Colonic mucosa (tissue), 4 donors: ENCODE measurements at regions of chr16 and their contacts with region 1.

Region 1: DNA sequence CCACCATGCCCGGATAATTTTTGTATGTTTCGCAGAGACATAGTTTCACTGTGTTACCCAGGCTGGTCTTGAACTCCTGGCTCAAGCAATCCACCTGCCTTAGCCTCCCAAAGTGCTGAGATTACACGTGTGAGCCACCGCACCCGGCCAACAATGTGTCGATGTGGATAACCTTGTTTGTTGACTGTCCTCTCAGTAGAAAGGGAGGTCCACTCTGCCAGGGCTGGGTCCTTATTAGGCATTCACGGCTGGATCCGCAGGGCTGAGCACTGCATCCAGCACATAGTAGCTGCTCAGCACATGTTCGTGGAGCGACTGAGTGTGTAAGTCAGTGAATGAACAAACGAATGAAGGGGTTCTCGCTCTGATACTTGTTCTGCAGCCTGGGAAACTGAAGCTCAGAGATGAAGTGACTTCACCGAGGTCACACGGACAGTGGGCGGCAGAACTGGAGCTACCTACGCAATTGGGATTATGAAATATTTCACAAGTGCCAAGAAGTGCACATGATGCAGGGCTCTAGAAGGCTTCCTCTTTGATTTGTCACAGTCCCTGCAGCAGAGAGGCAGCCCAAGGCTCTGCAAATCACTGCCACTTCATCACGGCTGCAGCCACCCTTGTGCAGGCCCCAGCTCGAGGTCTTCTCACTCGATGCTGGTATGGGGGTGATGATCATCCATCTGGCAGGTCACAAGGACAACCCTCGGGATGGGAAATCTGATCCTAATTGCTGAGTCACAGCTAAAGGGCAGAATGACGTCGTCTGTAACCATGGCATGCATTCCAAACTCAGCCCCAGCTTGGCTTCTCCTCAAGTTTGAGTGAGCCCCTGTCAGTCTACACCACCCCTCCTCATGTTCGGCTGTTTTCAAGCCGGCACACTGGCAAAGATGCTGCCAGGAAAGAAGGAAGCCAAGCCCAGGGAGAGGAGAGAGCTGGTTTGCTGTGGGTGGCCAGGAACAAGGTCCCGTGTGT is 28.0 kb upstream of the SNN start:
- DNase-seq: peak; percentile 58
- H3K4me3 ChIP-seq: no peak overlapping the region
- H3K27ac ChIP-seq: peak overlapping the region; percentile 56
- H3K4me1 ChIP-seq: peaks cover 5% of the 10 kb centered on the region
- H3K27me3 ChIP-seq: no peaks in the 10 kb centered on the region
- CTCF ChIP-seq: no peak

Region 2: DNA sequence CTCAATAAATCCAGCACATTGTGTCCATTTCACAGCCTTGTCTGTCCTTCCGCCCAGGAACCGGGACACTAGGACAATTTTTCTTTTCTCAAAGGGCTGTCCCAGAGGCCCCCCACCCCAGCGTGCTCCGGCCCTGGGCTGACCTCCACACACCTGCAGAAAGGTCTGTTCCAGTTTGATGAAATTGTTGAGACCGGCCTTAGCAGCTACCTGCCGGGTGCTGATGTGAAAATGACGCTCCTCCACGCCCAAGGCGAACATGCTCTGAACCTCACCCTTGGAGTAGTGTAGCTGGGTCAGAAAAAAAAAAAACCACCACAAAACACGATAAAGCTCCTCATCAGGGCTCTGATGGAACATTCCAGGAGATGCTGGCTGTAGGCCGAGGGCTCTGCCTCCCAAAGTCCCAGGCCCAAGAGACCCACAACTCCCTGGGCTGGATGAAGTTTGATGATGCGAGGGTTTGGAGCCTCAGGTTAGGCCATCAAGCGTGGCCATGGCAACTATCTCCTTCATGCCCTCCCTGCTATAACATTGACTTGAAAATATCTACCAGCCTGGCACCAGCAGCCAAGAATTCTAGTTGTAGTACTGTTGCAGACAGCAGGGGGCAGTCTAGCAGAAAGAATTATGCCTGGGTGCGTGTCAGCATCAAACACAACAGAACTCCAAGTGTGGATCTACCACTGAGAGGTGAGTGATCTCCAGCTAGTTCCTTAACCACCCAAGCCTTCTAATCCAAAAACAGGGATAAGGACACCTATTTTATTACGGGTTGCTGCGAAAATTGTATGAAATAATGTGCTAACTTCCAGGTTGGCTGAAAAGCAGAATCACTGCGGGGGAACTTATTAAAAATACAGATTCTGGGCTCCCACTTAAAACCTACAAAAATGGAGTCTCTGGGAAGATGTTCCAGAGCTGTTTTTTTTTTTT is 232.9 kb before region 1 on chr16:
- intact Hi-C with region 1: loop called (anchors 2 kb)
- DNase-seq: peak; percentile 73
- H3K4me3 ChIP-seq: no peak overlapping the region
- H3K27ac ChIP-seq: no peak overlapping the region
- H3K4me1 ChIP-seq: no peaks in the 10 kb centered on the region
- H3K27me3 ChIP-seq: no peaks in the 10 kb centered on the region
- CTCF ChIP-seq: peak; percentile 60

Region 3: DNA sequence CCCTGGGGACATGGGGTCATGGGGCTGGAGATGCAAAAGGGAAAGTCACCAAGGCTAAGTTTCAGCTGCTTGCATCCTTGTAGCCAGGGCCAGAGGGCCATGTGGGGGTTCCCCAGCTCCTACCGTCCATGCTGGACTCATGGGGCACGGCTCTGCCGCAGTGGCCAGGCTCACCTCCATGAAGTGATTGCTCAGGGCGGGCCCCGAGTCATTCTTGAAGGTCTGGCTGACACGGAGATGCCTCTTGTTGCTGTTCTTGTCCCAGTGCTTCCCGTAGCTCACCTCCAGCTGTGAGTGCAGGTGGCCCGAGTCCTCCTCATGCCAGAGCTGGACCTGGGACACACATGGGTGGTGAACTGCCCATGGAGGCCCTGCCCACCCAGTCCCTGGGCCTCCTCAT is 180.5 kb before region 1 on chr16:
- intact Hi-C with region 1: no loop called
- DNase-seq: no peak
- H3K4me3 ChIP-seq: no peak overlapping the region
- H3K27ac ChIP-seq: no peak overlapping the region
- H3K4me1 ChIP-seq: no peaks in the 10 kb centered on the region
- H3K27me3 ChIP-seq: no peaks in the 10 kb centered on the region
- CTCF ChIP-seq: no peak